Caco-2 (cell line): ENCODE measurements at regions of chr1 and their contacts with region 1.

Region 1: GRCh38 chr1:224644553-224645154 is 28.5 kb downstream of the CNIH3 start:
- DNase-seq: peak; percentile 74 to 78
- H3K4me3 ChIP-seq: no peak overlapping the region
- H3K4me3 Mint-ChIP-seq: no peak overlapping the region
- H3K27ac Mint-ChIP-seq: no peak overlapping the region
- H3K4me1 ChIP-seq: peaks cover 2% of the 10 kb centered on the region
- H3K4me1 Mint-ChIP-seq: no peaks in the 10 kb centered on the region
- H3K27me3 ChIP-seq: no peaks in the 10 kb centered on the region
- H3K27me3 Mint-ChIP-seq: no peaks in the 10 kb centered on the region
- CTCF ChIP-seq: peak; percentile 91

Region 2: DNA sequence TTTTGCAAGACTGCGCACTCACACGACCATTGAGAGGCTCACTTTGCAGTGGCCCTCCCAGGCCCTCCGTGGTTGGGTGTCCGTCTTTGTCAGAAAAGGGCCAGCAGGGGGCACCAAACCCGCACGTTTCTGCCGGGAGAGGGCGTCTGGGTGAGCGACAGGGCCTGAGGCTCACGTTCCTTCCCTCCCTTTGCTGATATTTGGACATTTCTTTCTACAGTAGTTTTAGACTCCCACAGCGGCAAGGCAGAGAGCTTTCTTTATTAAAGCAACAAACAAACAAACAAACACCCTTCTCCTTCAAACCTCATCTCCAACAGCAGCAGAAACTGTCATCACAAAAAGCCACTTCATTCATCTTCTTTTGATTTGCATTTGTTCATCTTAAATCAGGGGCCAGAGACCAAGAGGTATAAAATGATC is 130.9 kb before region 1 on chr1:
- CTCF ChIA-PET with region 1: interaction called, 3 read pairs
- POLR2A ChIA-PET with region 1: no interaction called
- intact Hi-C with region 1: loop called (anchors 1 kb)
- DNase-seq: peak; percentile 85 to 90
- H3K4me3 ChIP-seq: no peak overlapping the region
- H3K4me3 Mint-ChIP-seq: no peak overlapping the region
- H3K27ac Mint-ChIP-seq: no peak overlapping the region
- H3K4me1 ChIP-seq: peaks cover 8% of the 10 kb centered on the region; the same call in 1 of the 2 replicates
- H3K4me1 Mint-ChIP-seq: no peaks in the 10 kb centered on the region
- H3K27me3 ChIP-seq: no peaks in the 10 kb centered on the region
- H3K27me3 Mint-ChIP-seq: no peaks in the 10 kb centered on the region
- CTCF ChIP-seq: peak; percentile 95 to 99

Region 3: GRCh38 chr1:224615861-224616755 is 28.5 kb before region 1 on chr1 and contains the start of gene CNIH3:
- CTCF ChIA-PET with region 1: interaction called, 4 read pairs
- POLR2A ChIA-PET with region 1: no interaction called
- intact Hi-C with region 1: loop called (anchors 1 kb)
- DNase-seq: peak; percentile 79 to 82
- H3K4me3 ChIP-seq: peak within 1 kb of the TSS; percentile 62
- H3K4me3 Mint-ChIP-seq: peak within 1 kb of the TSS; percentile 80
- H3K27ac Mint-ChIP-seq: no peak within 1 kb of the TSS
- H3K4me1 ChIP-seq: peaks cover 16% of the 10 kb centered on the region; the same call in 1 of the 2 replicates
- H3K4me1 Mint-ChIP-seq: peaks cover 7% of the 10 kb centered on the region
- H3K27me3 ChIP-seq: no peaks in the 10 kb centered on the region; the same call in none of the 2 replicates
- H3K27me3 Mint-ChIP-seq: peaks cover 7% of the 10 kb centered on the region
- CTCF ChIP-seq: no peak
- total RNA-seq, gene CNIH3: 1.3 and 2.2 TPM in 2 replicates

Region 4: GRCh38 chr1:224851210-224851847 is 206.7 kb after region 1 on chr1:
- CTCF ChIA-PET with region 1: interaction called, 5 read pairs
- POLR2A ChIA-PET with region 1: no interaction called
- intact Hi-C with region 1: loop called (anchors 1 kb)
- DNase-seq: peak; percentile 43 to 54
- H3K4me3 ChIP-seq: no peak overlapping the region
- H3K4me3 Mint-ChIP-seq: no peak overlapping the region
- H3K27ac Mint-ChIP-seq: no peak overlapping the region
- H3K4me1 ChIP-seq: no peaks in the 10 kb centered on the region
- H3K4me1 Mint-ChIP-seq: no peaks in the 10 kb centered on the region
- H3K27me3 ChIP-seq: no peaks in the 10 kb centered on the region
- H3K27me3 Mint-ChIP-seq: no peaks in the 10 kb centered on the region
- CTCF ChIP-seq: peak; percentile 39 to 53

Region 5: DNA sequence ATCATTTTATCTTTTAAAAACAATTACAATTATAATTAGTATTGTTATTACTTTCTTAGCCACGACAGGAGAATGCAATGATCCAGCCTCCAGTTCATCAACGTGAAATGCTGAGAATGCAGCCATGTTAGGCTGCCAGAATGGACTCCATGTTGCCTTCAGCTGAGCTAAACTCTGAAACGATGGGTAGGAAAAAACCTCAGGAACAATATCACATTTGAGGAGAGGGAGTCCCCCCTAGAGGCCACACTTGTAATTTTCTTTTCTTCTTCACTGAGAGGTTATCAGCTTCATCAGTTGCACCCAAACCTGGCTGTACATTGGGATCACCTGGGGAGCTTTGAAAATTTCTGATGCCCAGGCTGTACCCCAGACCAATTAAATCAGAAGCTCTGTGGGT is 250.3 kb after region 1 on chr1:
- CTCF ChIA-PET with region 1: interaction called, 7 read pairs
- POLR2A ChIA-PET with region 1: no interaction called
- intact Hi-C with region 1: loop called (anchors 1 kb)
- DNase-seq: peak in 1 of 2 experiments; percentile 47
- H3K4me3 ChIP-seq: no peak overlapping the region
- H3K4me3 Mint-ChIP-seq: no peak overlapping the region
- H3K27ac Mint-ChIP-seq: no peak overlapping the region
- H3K4me1 ChIP-seq: no peaks in the 10 kb centered on the region
- H3K4me1 Mint-ChIP-seq: no peaks in the 10 kb centered on the region
- H3K27me3 ChIP-seq: no peaks in the 10 kb centered on the region
- H3K27me3 Mint-ChIP-seq: no peaks in the 10 kb centered on the region
- CTCF ChIP-seq: peak; percentile 44 to 47